ENCODE measurements at regions of chr6 and their contacts with region 1.

Region 1: DNA sequence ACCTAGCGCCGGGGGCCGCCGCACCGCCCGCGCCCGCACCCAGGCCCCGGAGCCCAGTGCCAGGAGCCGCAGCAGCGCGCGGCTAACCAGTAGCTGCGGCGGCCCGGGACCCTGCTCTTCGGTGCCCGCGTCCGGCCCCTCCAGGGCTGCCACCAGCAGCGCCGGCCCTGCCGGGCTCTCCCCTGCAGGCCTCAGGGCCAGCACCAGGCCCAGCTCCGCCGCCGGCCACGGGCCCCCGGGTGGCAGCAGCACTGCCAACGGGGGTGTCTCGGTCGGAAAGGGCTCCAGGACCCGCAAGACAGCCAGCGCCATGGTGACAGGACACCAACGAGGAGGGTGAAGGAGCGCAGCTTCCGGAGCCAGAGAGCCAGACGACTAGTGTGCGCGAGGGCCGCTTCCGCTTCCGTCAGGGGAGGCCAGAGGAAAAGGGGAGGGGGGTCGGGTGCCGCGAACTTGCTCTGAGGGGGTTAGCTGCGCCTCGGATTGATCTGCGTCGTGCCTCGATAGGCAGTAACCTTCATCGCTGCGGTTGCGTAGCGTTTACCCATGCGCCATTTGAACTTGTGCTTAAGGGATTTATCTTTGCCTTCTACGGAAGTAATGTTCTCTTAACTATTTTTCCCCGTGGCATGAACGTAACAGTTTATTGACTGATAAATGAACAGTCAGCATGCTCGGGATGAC is at the start of gene PEX6:
- DNase-seq: peak; percentile 96
- ATAC-seq: peak; percentile 90
- H3K4me3 Mint-ChIP-seq: peak within 1 kb of the TSS; percentile 85
- H3K27ac Mint-ChIP-seq: peak within 1 kb of the TSS; percentile 94
- H3K4me1 Mint-ChIP-seq: peaks cover 38% of the 10 kb centered on the region
- H3K27me3 Mint-ChIP-seq: no peaks in the 10 kb centered on the region
- total RNA-seq, gene PEX6: 11.1 to 12.0 TPM

Region 2: DNA sequence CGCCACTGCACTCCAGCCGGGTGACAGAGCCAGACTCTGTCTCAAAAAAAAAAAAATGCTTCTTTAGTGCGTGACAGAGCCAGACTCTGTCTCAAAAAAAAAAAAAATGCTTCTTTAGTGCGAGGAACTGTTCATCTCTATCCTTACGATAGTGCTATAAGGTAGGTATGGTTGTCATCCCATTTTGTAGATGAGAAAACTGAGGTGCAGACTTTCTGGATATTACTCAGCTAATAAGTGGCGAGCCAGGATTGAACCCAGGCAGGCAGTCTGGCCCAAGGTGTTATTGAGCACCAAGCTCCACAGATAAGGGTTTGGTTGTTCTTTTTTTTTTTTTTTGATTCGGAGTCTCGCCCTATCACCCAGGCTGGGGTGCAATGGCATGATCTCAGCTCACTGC is 22.9 kb after region 1 on chr6:
- CTCF ChIA-PET with region 1: interaction called, 4 read pairs
- POLR2A ChIA-PET with region 1: interaction called, 14 read pairs
- DNase-seq: no peak
- ATAC-seq: no peak
- H3K4me3 Mint-ChIP-seq: no peak overlapping the region
- H3K27ac Mint-ChIP-seq: no peak overlapping the region
- H3K4me1 Mint-ChIP-seq: no peaks in the 10 kb centered on the region
- H3K27me3 Mint-ChIP-seq: no peaks in the 10 kb centered on the region

Region 3: DNA sequence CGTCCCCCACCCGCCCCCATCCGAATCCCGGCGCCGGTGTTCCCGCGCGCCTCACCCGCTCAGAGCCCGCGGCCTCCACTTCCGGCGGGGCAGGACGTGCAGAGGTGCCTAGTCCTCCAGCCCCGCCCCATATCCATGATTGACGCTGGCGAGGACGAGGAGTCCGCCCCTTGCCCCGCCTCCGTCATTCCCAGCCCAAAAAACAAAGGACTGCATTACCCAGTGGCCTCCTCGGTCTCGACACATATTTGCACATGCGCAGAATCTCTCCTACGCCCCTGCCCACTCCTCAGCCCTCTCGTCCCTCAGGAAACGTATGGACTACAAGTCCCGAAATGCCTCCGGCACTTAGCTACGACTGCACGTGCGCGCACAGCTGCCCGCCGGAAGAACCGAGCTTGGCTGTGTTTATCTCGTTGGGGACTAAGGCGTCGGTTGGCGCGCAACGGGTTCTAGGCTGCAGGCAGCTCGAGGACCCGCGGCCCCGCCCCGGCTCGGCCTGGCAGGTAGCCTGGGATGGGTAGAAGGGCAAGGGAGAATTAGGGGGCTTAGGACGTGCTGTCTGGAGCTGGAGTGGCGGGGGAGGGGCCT is 35.0 kb after region 1 on chr6 and contains the starts of genes KLHDC3 and MEA1:
- CTCF ChIA-PET with region 1: interaction called, 4 read pairs
- POLR2A ChIA-PET with region 1: interaction called, 22 read pairs
- DNase-seq: peak; percentile 100
- ATAC-seq: peak; percentile 95
- H3K4me3 Mint-ChIP-seq: peak within 1 kb of the TSS; percentile 97
- H3K27ac Mint-ChIP-seq: peak within 1 kb of the TSS; percentile 90
- H3K4me1 Mint-ChIP-seq: peaks cover 43% of the 10 kb centered on the region
- H3K27me3 Mint-ChIP-seq: no peaks in the 10 kb centered on the region
- total RNA-seq, gene KLHDC3: 75.4 to 76.0 TPM
- total RNA-seq, gene MEA1: 77.1 to 84.1 TPM

Region 4: DNA sequence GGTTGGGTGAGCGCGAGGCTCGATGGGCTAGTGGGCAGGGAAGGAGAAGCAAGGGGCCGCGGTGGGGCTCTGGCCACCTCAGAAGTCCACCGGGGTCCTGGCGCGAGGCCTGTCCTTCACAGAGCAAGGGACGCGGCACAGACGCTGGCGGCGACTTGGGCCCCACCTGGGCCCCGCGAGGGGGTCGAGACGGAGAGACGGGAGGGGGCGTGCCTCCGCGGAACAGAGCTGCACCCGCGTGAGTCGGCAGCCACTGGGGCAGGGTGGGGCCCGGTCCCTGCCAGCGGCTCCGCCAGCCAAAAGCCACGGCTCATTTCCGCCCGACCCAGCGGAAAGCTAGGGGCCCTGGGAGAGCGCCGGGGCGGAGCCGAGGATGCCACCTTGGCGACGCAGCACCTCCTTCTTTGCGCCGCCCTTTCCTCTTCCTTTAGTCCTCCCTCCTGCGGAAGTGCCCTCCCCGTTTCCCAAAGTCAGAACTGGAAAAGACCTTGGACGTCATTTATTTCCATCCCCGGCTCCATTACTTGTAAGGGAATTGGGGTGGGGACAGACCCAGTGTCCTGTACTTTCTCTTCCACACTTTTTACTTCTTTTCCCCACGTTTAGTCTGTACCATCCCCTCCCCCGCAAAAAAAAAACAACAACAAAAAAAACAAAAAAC is 74.7 kb after region 1 on chr6 and contains the start of gene CUL7:
- CTCF ChIA-PET with region 1: interaction called, 5 read pairs
- POLR2A ChIA-PET with region 1: interaction called, 12 read pairs
- DNase-seq: peak; percentile 94
- ATAC-seq: peak; percentile 99
- H3K4me3 Mint-ChIP-seq: peak within 1 kb of the TSS; percentile 90
- H3K27ac Mint-ChIP-seq: peak within 1 kb of the TSS; percentile 99
- H3K4me1 Mint-ChIP-seq: peaks cover 46% of the 10 kb centered on the region
- H3K27me3 Mint-ChIP-seq: no peaks in the 10 kb centered on the region
- total RNA-seq, gene CUL7: 8.5 to 8.9 TPM